Calu3 (cell line): ENCODE measurements at regions of chrX and their contacts with region 1.

Region 1: DNA sequence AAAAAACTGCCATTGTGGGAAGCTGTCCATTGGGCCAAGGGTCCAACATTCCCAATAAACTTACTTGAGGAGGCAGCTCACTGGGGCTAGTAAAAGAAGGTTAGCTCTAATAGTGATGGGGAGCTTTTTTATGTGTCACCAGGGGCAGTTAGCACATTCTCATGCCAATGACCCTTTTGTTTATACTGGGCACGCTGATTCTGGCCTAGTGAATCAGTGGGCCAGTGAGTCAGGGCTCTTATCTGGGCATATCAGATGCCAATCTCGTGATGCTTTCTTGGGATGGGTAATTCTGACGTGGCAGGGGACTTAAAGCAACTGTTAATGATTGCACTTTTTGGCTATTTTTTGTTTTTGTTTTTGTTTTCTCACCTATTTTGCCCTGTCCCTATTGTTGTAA is 27.9 kb downstream of the TCEAL1 start:
- DNase-seq: peak; percentile 51
- H3K4me3 Mint-ChIP-seq: no peak overlapping the region
- H3K27ac Mint-ChIP-seq: peak overlapping the region; percentile 52
- H3K4me1 Mint-ChIP-seq: peaks cover 32% of the 10 kb centered on the region
- H3K27me3 Mint-ChIP-seq: no peaks in the 10 kb centered on the region
- CTCF ChIP-seq: no peak

Region 2: GRCh38 chrX:103629318-103630170 is 27.1 kb before region 1 on chrX:
- CTCF ChIA-PET with region 1: interaction called, 11 read pairs
- intact Hi-C with region 1: no loop called
- DNase-seq: peak; percentile 65
- H3K4me3 Mint-ChIP-seq: peak overlapping the region; percentile 97
- H3K27ac Mint-ChIP-seq: peak overlapping the region; percentile 48
- H3K4me1 Mint-ChIP-seq: peaks cover 9% of the 10 kb centered on the region
- H3K27me3 Mint-ChIP-seq: no peaks in the 10 kb centered on the region
- CTCF ChIP-seq: peak; percentile 43

Region 3: DNA sequence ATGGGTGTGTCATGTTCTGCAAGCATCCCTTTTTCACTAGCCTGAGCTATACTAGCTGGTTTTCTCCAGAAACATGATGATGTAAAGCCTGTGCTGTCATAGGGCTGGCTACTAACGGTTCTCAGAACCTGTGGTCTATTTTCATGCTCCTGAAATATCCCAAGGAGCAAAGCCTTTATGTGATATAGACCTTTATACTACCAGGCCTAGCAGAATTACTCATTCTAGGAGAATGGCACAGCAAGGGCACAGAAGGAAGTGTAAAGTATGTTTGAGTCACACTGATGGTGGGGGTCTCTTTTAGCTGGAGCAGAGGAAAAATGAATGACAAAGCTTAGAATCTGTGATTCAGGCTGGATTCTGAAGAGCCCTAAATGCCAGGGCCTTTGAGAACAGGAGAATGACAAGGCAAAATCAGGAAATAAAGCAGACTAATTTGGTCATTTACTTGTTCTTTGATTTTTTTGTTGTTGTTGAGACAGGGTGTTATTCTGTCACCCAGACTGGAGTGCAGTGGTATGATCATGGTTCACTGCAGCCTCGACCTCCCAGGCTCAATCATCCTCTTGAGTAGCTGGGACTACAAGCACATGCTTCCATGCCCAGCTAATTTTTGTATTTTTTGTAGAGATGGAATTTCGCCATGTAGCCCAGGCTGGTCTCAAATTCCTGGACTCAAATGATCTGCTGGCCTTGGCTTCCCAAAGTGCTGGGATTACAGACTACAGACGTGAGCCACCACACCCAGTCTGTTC is 16.1 kb before region 1 on chrX:
- CTCF ChIA-PET with region 1: interaction called, 3 read pairs
- intact Hi-C with region 1: loop called (anchors 1 kb)
- DNase-seq: no peak
- H3K4me3 Mint-ChIP-seq: no peak overlapping the region
- H3K27ac Mint-ChIP-seq: peak overlapping the region; percentile 69
- H3K4me1 Mint-ChIP-seq: peaks cover 27% of the 10 kb centered on the region
- H3K27me3 Mint-ChIP-seq: no peaks in the 10 kb centered on the region
- CTCF ChIP-seq: no peak

Region 4: GRCh38 chrX:103864886-103865534 is 208.4 kb after region 1 on chrX:
- CTCF ChIA-PET with region 1: no interaction called
- intact Hi-C with region 1: no loop called
- DNase-seq: no peak
- H3K4me3 Mint-ChIP-seq: peak overlapping the region; percentile 14
- H3K27ac Mint-ChIP-seq: peak overlapping the region; percentile 75
- H3K4me1 Mint-ChIP-seq: peaks cover 34% of the 10 kb centered on the region
- H3K27me3 Mint-ChIP-seq: no peaks in the 10 kb centered on the region
- CTCF ChIP-seq: no peak

Region 5: DNA sequence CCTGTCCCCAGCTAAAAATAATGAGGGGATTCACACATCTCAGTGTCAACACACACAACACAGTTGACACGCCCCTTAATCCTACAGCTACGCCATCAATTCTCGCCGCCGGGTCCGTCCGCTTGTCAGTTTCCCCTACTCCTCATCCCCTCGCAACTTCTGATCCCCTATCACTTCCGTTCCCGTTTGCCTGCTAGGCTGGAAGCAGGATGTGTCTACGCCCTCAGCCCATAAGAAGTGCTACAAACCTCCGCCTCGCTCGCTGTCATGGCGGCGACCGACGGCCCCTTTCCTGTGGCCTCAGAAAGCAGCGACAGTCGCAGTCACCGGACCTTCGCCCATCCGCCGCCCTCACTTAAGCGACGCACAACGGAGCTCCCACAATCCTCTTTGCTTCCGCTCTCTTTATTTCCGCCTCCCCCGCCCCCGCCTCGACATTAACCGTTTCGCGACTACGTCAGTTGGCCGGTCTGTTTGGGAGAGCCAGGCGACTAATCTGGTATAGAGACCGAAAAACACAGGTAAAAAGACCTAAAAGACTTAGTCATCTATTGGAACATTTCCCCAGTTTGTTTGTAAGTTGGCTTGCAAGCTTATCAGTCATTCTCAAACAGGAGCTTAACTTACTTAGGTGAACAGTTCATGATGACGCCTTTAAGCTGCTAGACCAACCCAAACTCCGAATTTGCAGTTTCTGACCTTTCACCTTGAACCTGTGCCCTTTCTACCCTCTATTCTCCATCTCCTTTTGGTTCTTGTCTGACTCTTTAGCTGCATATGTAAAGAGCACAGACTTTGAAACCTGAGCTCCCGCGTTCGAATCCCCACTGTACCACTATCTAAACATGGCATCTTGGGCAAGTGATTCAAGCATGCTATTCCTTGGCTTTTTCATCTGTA is 500.2 kb after region 1 on chrX and contains the start of gene SLC25A53:
- CTCF ChIA-PET with region 1: no interaction called
- intact Hi-C with region 1: no loop called
- DNase-seq: peak; percentile 75
- H3K4me3 Mint-ChIP-seq: peak within 1 kb of the TSS; percentile 76
- H3K27ac Mint-ChIP-seq: peak within 1 kb of the TSS; percentile 90
- H3K4me1 Mint-ChIP-seq: no peaks in the 10 kb centered on the region
- H3K27me3 Mint-ChIP-seq: no peaks in the 10 kb centered on the region
- CTCF ChIP-seq: no peak
- total RNA-seq, gene SLC25A53: 5.9 and 6.9 TPM in 2 replicates